Left cardiac atrium (tissue), 4 donors: ENCODE measurements at regions of chr4 and their contacts with region 1.

Region 1: GRCh38 chr4:41538017-41538733 is at the start of gene LIMCH1:
- DNase-seq: peak; percentile 86
- ATAC-seq: peak; percentile 89 to 91
- total RNA-seq, gene LIMCH1: 168 to 200 TPM

Region 2: DNA sequence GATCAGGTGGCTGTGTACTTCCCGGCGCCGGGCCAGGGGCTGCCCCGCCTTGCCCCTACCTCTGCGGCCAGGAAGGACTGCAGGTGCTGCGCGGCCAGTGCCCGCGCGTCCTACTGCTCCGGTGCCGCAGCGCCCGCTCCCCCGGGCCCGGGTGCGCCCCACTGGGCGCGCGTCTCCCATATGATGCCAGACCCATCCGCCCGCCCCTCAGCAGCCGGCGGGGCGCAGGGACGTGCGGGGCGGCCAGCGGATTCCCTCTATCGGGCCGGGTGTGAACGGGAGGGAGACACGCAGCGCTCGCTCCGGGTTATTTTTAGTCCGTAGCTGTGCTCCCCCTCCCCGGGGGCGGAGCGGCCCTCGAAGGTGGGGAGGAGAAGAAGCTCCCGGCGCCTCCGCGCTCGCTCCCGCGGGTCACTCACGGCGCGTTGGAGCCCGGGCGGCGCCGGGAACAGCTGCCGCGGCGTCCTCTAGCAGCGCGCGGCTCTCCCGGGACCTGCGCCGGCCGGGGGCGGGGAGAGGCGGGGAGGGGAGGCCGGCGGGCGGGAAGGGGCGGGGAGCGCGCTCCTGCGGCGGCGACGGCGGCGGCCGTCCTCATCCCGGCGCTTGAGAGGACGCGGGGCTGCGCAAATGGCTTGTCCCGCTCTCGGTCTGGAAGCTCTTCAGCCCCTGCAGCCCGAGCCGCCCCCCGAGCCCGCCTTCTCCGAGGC is 177.8 kb before region 1 on chr4:
- intact Hi-C with region 1: loop called in 1 of 2 experiments (anchors 5 kb)
- DNase-seq: peak; percentile 85
- ATAC-seq: peak; percentile 90 to 92

Region 3: DNA sequence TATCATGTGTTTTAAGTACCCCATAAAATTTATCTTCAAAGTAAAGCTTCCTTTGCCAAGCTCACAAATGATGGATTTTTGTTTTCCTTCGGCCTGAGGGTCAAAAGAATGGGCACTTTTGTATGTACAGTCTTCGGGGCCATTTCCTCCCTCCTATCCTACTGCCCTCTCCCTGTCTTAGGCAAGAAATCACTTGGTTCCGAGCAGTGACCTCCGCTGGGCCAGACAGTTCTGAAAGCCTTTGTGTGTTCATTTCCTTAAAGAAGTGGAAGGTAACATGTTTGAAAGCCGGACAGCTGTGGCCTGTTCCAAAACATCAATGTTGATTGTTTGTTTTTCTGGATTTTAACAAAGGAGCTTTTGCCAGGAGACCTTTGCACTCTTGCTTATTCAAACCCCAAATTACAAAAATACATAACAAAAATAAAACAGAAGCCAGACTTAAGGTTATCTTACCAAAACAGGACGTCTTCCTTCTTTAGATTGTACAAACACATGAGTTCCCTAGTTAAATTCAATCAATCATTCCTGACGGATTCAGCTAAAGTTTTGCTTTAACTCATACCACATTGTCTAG is 110.8 kb before region 1 on chr4:
- intact Hi-C with region 1: loop called in 1 of 2 experiments (anchors 5 kb)
- DNase-seq: peak; percentile 47
- ATAC-seq: peak; percentile 19 to 31

Region 4: GRCh38 chr4:41661442-41662076 is 123.4 kb after region 1 on chr4:
- intact Hi-C with region 1: loop called in 1 of 2 experiments (anchors 10 kb)
- DNase-seq: peak; percentile 57
- ATAC-seq: peak in 1 of 2 donors; percentile 75